ENCODE measurements at regions of chr11 and their contacts with region 1.

Region 1: GRCh38 chr11:82718307-82718706 is 15.4 kb downstream of the FAM181B start:
- DNase-seq: peak in 8 of 10 donors; percentile 28 to 61 (median 54)
- H3K4me3 ChIP-seq: peak overlapping the region in 40 of 59 donors; percentile 0 to 47 (median 22)
- H3K27ac ChIP-seq: peak overlapping the region; percentile 49 to 97 (median 91)
- H3K27me3 ChIP-seq: no peaks in the 10 kb centered on the region
- CTCF ChIP-seq: peak; percentile 76 to 98 (median 88)

Region 2: GRCh38 chr11:82733444-82734119 is 15.3 kb after region 1 on chr11 and contains the start of gene FAM181B:
- intact Hi-C with region 1: loop called in 1 of 2 experiments (anchors 2 kb)
- DNase-seq: peak; percentile 26 to 85 (median 78)
- H3K4me3 ChIP-seq: peak within 1 kb of the TSS; percentile 53 to 93 (median 79)
- H3K27ac ChIP-seq: peak within 1 kb of the TSS; percentile 58 to 98 (median 94)
- H3K27me3 ChIP-seq: peaks cover 0 to 8% (median 0%) of the 10 kb centered on the region in 45 donors
- CTCF ChIP-seq: peak in 34 of 56 donors; percentile 8 to 52 (median 31)
- total RNA-seq, gene FAM181B: 11.4 to 62.1 (median 20.1) TPM

Region 3: DNA sequence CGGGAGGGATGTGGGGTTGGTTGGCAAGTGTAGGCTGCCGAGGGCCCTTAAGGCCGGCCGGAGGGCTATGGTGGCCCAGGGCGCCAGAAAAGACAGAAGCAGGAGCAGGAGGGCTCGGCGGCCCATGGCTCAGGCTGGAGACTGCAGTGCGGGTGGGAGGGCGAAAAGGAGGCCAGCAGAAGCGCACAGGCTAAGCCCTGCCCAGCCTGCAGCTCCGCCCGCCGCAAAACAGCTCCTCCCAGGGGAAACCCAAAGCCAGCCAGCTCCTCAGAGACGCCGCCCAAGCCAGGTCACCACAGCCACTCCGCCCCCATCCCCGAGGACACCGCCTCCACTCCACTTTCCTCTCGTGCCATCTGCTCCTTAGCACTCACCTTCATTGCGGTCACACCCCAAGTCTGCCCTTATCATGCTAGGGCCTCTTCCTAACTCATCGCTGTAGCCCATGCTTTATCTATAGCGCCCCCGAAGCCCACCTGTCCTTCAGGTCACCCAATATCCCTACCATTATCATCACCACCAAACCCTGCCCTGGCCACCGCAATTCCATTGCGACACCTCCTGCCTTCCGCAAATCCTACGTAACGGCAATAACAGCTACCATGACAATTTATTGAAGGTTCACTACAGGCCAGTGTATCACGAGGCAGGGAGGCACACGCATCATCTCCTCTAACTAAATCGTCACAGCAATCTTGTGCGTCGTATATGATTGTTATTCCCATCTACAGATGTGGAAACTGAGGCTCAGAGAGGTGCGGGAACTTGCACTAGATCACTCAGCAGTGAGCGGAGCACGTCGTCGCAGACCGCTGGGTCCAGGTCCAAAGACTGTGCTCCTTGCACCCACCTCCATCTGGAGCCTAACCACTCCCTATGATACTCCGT is 182.2 kb after region 1 on chr11 and contains the start of gene PRCP:
- intact Hi-C with region 1: loop called in 1 of 2 experiments (anchors 2 kb)
- DNase-seq: peak; percentile 63 to 95 (median 88)
- H3K4me3 ChIP-seq: peak within 1 kb of the TSS; percentile 58 to 89 (median 78)
- H3K27ac ChIP-seq: peak within 1 kb of the TSS; percentile 7 to 95 (median 88)
- H3K27me3 ChIP-seq: no peaks in the 10 kb centered on the region
- CTCF ChIP-seq: peak in 28 of 56 donors; percentile 3 to 43 (median 25)
- total RNA-seq, gene PRCP: 38.4 to 137 (median 59.7) TPM

Region 4: GRCh38 chr11:83241291-83241946 is 523.1 kb after region 1 on chr11:
- intact Hi-C with region 1: loop called in 1 of 2 experiments (anchors 10 kb)
- DNase-seq: peak in 3 of 10 donors; percentile 19 to 46 (median 33)
- H3K4me3 ChIP-seq: no peak overlapping the region
- H3K27ac ChIP-seq: no peak overlapping the region
- H3K27me3 ChIP-seq: no peaks in the 10 kb centered on the region
- CTCF ChIP-seq: peak in 51 of 56 donors; percentile 14 to 66 (median 43)

Region 5: GRCh38 chr11:83827940-83828554 is 1109.7 kb after region 1 on chr11:
- intact Hi-C with region 1: loop called in 1 of 2 experiments (anchors 10 kb)
- DNase-seq: no peak
- H3K4me3 ChIP-seq: peak overlapping the region in 45 of 59 donors; percentile 10 to 57 (median 34)
- H3K27ac ChIP-seq: peak overlapping the region in 56 of 59 donors; percentile 8 to 85 (median 67)
- H3K27me3 ChIP-seq: no peaks in the 10 kb centered on the region
- CTCF ChIP-seq: peak; percentile 38 to 83 (median 70)